SK-N-SH (cell line): ENCODE measurements at regions of chr17 and their contacts with region 1.

Region 1: DNA sequence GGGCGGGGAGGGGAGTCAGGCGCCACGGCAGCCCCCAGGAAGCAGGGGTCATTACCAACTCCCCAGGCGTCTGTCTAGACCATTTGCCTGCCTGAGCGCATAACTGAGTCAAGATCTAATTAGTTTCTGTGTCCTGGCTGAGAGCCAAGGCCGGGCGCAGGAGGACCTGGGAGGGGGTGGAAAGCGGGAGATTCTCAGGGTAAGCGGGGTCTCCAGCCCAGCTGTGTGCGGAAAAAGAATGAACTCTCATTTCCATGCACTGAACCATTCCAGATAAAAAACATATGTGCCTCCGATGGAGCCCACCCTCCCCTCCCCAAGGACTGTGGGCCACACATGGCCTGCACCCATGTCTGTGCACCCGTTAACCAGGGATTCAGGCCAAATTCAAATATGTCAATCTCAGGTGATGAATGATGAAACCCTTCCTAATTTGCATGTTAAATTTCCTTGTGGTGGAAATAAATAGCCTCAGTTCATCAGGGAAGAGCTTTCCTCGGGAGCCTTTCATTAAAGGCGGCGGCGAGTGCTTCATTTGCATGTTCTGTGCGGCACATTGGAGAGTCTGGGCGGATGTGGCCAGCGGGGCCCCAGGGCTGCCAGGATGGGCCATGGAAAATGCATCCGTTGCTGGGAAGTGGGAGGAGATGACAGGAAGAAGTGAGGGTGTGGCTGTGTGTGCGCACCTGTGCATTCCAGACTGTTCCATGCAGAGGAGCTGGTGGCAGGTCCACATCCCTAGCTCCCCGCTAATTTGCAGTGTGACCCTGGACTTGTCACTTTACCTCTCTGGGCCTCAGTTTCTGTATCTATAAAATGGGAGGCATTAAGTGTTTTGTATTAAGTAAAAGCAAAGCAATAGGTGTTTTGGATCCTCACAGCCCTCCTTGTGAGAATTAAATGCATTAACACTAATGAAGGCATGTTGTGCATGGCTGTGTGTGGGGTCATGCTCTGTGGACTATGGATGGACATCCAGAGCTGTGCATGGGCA is 151.1 kb downstream of the SDK2 start:
- DNase-seq: peak; percentile 93
- H3K4me3 ChIP-seq: no peak overlapping the region; a peak in 1 of 4 replicates
- H3K27ac ChIP-seq: peak overlapping the region in 1 of 2 experiments; percentile 92; a peak in 2 of 4 replicates
- H3K4me1 ChIP-seq: peaks cover 0 to 59% of the 10 kb centered on the region in 2 experiments; a peak in 2 of 4 replicates
- H3K27me3 ChIP-seq: no peaks in the 10 kb centered on the region
- CTCF ChIP-seq: no peak
- EP300 ChIP-seq: peak; percentile 3 to 90; a peak in 2 of 4 replicates
- RAD21 ChIP-seq: peak; percentile 32

Region 2: DNA sequence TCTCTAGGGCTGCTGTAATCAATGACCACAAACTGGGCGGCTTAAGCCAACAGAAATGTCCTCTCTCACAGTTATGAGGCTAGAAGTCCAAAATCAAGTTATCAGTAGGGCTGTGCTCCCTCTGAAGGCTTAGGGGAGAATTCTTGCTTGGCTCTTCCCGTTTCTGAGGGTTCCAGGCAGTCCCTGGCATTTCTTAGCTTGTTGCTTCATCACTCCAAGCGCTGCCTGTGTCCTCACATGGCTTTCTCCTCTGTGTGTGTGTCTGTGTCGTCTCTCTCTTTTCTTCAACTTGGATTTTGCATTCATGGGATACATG is 167.6 kb before region 1 on chr17:
- CTCF ChIA-PET with region 1: no interaction called
- POLR2A ChIA-PET with region 1: no interaction called
- DNase-seq: no peak
- H3K4me3 ChIP-seq: no peak overlapping the region
- H3K27ac ChIP-seq: no peak overlapping the region
- H3K4me1 ChIP-seq: peaks cover 0 to 22% of the 10 kb centered on the region in 2 experiments; a peak in 1 of 4 replicates
- H3K27me3 ChIP-seq: no peaks in the 10 kb centered on the region
- CTCF ChIP-seq: no peak
- EP300 ChIP-seq: no peak
- RAD21 ChIP-seq: no peak

Region 3: GRCh38 chr17:73474370-73474988 is 18.6 kb before region 1 on chr17:
- CTCF ChIA-PET with region 1: interaction called, 46 read pairs
- POLR2A ChIA-PET with region 1: interaction called, 8 read pairs
- DNase-seq: peak; percentile 98
- H3K4me3 ChIP-seq: no peak overlapping the region
- H3K27ac ChIP-seq: peak overlapping the region in 1 of 2 experiments; percentile 99; a peak in 3 of 4 replicates
- H3K4me1 ChIP-seq: peaks cover 0 to 23% of the 10 kb centered on the region in 2 experiments; a peak in 2 of 4 replicates
- H3K27me3 ChIP-seq: no peaks in the 10 kb centered on the region
- CTCF ChIP-seq: no peak
- EP300 ChIP-seq: peak in 1 of 2 experiments; percentile 99; a peak in 2 of 4 replicates
- RAD21 ChIP-seq: peak; percentile 33; the same call in 1 of the 2 replicates